Activated naive CD4-positive, alpha-beta T cell treated with anti-CD3 and anti-CD28 coated beads for 36 hours (primary cell): ENCODE measurements at regions of chr14 and their contacts with region 1.

Region 1: DNA sequence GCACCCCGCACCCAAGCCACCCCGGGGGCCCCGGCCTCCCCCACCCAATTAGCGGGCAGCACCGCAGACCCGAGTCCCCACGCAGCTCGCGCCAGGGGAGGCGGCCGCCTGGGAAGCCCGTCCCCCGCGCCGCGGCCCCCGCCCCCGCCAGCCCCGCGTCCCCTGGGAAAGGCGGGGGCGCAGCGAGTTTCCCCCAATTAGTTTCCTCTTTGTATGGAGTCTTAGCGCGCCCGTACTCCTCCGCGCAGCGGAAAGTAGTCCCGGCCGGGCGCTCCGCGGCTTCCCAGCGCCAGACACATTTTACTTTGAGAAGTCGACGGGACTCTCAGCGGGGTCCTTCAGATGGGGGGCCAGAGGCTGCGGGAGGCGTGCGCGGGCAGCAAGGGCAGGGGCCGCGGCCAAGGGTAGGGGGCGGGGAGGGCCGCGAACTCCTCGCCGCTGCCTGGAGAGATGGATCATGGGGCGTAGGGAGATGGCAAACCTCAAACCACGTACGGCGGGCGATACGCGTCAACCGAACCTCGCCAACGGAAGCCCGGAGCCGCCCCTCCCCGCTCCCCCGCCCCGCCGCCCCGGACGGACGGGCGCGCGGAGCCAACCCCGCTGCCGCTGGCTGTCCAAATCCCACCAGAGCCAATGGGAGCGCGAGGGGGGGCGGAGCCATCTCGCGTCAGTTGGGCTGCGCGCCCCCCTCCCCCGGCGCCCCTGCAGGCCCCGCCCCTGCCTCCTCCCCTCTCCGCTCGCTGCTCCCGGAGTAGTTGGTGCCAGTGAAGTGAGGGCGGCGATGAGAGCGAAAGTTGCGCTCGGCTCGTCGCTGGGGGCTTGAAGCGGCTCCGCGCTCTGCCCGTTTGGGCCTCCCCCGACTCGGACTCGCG is at the start of gene RCOR1:
- DNase-seq: peak; percentile 98
- H3K4me3 Mint-ChIP-seq: peak within 1 kb of the TSS; percentile 85
- H3K27ac Mint-ChIP-seq: peak within 1 kb of the TSS; percentile 91
- H3K4me1 Mint-ChIP-seq: peaks cover 31% of the 10 kb centered on the region
- H3K27me3 Mint-ChIP-seq: no peaks in the 10 kb centered on the region
- total RNA-seq, gene RCOR1: 11.9 to 12.2 TPM

Region 2: DNA sequence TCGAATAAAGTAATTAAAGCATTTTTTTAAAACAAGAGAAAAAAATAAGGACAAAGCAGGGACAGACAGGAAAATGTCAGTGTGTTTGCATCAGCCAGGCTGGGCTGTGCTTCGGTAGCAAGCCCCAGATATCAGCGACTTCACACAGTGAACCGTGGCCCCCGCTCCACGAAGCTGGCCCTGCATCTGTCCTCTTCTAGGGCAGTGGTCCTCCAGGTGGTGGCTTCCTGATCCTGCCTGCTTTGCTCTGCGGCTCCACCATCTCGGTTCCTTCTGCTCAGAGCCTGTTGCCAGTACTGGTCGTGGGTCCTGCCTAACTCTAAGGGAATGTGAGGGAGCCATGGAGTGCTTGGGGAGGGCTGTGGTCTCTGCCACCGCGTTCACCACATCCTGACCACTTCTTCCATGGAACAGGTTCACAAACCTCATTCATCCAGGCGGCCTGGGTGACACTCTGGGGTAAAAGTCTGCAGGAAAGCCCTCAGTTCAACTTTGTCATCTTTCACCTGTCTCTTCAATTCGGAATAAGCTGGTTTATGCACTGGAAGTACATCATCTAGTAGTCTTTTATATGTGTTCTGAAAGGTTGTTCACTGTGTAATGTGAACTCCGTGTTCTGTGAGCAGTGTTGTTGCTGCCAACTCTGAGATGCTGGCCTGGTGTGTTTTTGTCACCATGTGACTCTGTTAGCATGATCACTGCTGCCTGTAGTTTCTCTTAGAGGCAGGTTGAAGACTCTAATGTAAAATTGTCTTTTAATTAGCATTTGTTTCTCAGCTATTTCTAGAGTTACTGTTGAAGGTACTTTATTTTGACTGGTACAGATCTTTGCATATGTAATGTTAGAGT is 130.4 kb before region 1 on chr14:
- CTCF ChIA-PET with region 1: no interaction called
- intact Hi-C with region 1: no loop called
- DNase-seq: no peak
- H3K4me3 Mint-ChIP-seq: no peak overlapping the region
- H3K27ac Mint-ChIP-seq: peak overlapping the region; percentile 46
- H3K4me1 Mint-ChIP-seq: no peaks in the 10 kb centered on the region
- H3K27me3 Mint-ChIP-seq: no peaks in the 10 kb centered on the region

Region 3: DNA sequence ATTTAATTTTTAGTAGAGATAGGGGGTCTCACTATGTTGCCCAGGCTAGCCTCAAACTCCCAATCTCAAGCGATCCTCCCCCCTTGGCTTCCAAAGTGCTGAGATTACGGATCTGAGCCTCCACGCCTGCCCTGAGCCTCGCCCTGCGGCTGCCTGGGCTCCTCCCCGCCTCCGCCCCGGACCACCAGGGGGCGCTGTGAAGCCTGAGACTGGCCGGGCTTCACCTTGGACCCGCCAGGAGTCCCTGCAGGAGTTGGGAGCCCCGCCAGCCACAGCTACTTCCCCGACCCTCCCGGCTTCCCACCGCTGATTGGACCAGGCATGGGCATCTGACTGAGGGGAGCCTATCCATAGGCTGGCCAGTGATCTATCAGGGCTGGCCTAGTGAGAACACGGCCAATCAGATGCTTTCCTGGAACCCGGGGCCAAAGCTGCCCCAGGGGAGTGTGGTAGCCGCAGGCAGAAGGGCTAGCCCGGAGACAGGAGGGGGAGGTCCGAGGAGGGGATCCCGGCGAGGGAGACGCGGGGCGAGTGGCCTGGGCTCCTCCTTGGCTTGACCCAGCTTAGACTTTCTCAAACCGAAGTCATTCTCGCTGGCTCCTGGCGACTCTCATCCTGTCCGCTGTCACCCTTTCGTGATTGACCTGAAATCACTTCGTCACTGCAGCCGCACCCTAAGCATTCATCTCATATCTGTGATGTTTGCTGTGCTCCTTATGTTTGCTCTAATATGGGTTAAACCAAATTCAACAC is 67.5 kb before region 1 on chr14:
- CTCF ChIA-PET with region 1: interaction called, 9 read pairs
- intact Hi-C with region 1: loop called (anchors 1 kb)
- DNase-seq: peak; percentile 97
- H3K4me3 Mint-ChIP-seq: peak overlapping the region; percentile 83
- H3K27ac Mint-ChIP-seq: peak overlapping the region; percentile 56
- H3K4me1 Mint-ChIP-seq: peaks cover 28% of the 10 kb centered on the region
- H3K27me3 Mint-ChIP-seq: no peaks in the 10 kb centered on the region

Region 4: DNA sequence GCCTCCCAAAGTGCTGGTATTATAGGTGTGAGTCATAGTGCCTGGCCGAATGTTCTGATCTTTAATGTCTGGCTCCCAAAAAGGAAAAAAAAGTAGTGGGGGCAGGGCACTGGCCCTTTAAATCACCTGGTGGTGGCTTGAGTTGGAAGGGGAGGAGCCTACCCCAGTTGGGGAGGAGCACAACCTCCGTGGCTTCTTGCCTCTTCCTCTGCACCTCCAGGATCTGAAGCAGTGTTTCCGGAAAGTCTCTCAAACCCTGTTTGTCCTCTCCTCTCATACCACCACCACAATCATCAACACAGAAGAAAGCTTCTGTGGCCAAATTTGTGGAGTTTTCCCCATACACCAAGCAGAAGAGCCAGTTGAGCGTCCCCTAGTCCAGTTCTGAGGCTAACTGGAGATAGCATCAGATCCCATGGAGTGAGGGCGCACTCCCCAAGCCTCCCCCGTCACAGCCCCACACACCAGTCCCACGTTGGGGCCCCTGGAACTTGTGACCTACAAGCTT is 24.0 kb before region 1 on chr14:
- CTCF ChIA-PET with region 1: interaction called, 6 read pairs
- intact Hi-C with region 1: loop called (anchors 2 kb)
- DNase-seq: peak; percentile 78
- H3K4me3 Mint-ChIP-seq: peak overlapping the region; percentile 62
- H3K27ac Mint-ChIP-seq: peak overlapping the region; percentile 88
- H3K4me1 Mint-ChIP-seq: peaks cover 11% of the 10 kb centered on the region
- H3K27me3 Mint-ChIP-seq: no peaks in the 10 kb centered on the region

Region 5: GRCh38 chr14:102655170-102655569 is 63.0 kb after region 1 on chr14:
- CTCF ChIA-PET with region 1: no interaction called
- intact Hi-C with region 1: no loop called
- DNase-seq: no peak
- H3K4me3 Mint-ChIP-seq: no peak overlapping the region
- H3K27ac Mint-ChIP-seq: no peak overlapping the region
- H3K4me1 Mint-ChIP-seq: peaks cover 42% of the 10 kb centered on the region
- H3K27me3 Mint-ChIP-seq: no peaks in the 10 kb centered on the region

Region 6: GRCh38 chr14:102819176-102819628 is 227.1 kb after region 1 on chr14:
- CTCF ChIA-PET with region 1: no interaction called
- intact Hi-C with region 1: loop called (anchors 1 kb)
- DNase-seq: peak; percentile 93
- H3K4me3 Mint-ChIP-seq: peak overlapping the region; percentile 44
- H3K27ac Mint-ChIP-seq: peak overlapping the region; percentile 93
- H3K4me1 Mint-ChIP-seq: peaks cover 88% of the 10 kb centered on the region
- H3K27me3 Mint-ChIP-seq: no peaks in the 10 kb centered on the region